Heart right ventricle (tissue), 16 donors: ENCODE measurements at regions of chr7 and their contacts with region 1.

Region 1: DNA sequence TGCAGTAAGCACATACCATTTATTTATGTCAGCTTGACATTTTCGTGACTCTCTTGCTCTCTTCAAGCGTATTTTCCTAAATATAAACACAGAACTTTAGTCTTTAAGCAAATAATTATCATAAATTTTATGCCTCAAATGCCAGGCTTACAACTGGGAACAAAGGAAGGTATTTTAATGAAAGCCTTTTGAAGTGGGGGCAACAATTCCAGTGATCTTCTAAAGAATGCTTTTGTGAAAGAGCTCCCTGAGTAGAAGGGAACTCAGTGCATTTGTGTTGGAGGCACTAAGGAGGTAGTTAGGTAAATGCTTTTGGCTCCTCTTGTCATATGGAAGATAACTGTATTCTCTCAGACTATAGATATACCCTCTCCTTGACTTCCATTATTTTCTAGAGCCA is 104.9 kb downstream of the VPS50 start:
- DNase-seq: no peak
- ATAC-seq: no peak
- H3K4me3 ChIP-seq: no peak overlapping the region
- H3K27ac ChIP-seq: no peak overlapping the region
- H3K4me1 ChIP-seq: no peaks in the 10 kb centered on the region
- H3K27me3 ChIP-seq: no peaks in the 10 kb centered on the region
- CTCF ChIP-seq: no peak

Region 2: GRCh38 chr7:93284908-93285307 is 52.1 kb before region 1 on chr7:
- intact Hi-C with region 1: loop called in 1 of 10 experiments (anchors 5 kb)
- DNase-seq: no peak
- ATAC-seq: no peak
- H3K4me3 ChIP-seq: no peak overlapping the region
- H3K27ac ChIP-seq: no peak overlapping the region
- H3K4me1 ChIP-seq: peaks cover 0 to 3% (median 0%) of the 10 kb centered on the region in 9 donors
- H3K27me3 ChIP-seq: no peaks in the 10 kb centered on the region
- CTCF ChIP-seq: no peak